Activated T-helper 1 cell treated with anti-CD3 and anti-CD28 coated beads, Interleukin-12 subunit alpha, Interleukin-12 subunit beta, Interleukin-2, Interleukin-4 antibody, amounts not matched to agents 30 ng/mL and 10 ng/mL and 1 ng/mL, durations not matched to agents 14 hours and 24 hours and 36 hours (primary cell): ENCODE measurements at regions of chr10 and their contacts with region 1.

Region 1: DNA sequence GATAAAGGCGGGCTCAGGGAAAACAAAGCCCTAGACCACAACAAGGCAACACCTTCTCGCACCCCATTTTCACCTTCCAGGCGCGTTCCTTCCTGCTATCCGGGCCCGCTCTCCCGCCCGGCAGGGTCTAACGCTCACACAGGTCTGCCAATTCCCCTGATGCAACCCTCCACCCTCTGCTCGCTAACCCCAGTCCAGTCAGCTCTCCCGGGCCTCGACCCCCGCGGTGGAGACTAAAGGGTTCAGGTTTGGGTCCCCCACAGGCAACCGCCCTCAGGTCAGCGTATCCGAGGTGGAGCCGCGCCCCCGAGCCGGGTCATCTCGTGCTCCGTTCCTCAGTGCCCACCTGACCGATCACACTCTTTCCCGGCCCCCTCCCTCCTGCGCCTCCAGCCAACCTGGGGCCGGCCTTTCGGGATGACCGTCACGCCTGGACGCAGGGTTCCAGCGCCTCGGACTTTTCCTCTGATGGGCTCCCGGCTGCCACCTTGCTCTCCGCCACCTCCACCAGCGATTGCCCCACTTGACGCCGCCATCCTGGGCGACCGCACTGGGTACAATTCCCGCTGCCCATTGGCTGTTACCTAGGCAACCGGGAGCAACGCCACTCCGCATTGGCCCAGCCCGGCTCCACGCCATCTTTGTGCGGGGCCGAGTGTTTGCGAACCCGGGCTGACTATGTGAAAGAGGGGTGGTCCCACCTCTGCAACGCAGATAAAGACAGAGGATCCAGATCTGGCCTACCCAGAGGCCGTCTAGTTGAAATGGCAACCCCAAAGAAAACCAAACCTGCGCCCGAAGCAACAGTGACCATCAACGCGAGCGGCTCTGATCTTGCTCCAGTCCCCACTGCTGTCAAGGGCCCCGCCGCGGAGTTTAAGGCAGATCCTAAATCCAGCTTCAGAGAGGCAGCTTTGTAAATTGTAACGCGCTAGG is at the start of gene MORN4:
- DNase-seq: peak; percentile 89
- H3K4me3 Mint-ChIP-seq: peak within 1 kb of the TSS; percentile 96
- H3K27ac Mint-ChIP-seq: peak within 1 kb of the TSS; percentile 89
- H3K4me1 Mint-ChIP-seq: peaks cover 19% of the 10 kb centered on the region
- H3K27me3 Mint-ChIP-seq: peaks cover 2% of the 10 kb centered on the region
- total RNA-seq, gene MORN4: 1.9 TPM in 2 replicates

Region 2: DNA sequence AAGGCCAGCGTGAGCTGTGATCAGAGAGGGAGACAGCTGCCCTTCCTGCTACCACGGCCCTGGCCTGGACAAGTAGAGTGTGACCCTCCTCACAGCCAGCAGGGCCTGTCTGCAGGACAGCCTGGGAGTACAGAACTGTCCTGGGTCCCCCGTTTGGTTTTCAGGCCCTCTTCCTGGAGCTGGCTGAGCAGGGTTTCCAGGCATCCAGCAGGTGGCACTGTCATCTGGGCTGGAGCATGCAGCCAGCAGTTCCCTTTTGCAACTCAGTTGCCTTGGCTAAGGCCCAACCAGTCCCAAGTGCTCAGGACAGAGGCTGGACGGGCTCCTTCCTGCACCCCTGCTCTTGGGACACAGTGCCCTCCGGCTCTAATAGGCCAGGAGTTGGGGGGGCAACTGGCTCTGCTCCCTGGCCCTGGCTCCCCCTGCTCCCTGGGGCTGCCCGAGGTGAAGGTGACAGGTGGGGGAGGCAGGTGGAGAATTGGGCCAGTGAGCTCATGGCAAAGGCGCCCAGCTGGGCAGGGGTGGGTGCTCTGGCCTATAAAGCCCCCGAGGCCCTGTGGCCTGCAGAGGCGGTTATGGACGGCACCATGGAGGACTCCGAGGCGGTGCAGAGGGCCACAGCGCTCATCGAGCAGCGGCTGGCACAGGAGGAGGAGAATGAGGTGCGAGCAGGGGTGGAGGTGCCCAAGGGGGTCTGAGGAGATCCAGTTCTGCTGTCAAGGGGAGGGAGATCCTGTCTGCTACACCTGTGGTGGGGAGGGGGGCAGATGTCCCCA is 60.8 kb before region 1 on chr10 and contains the start of gene ANKRD2:
- intact Hi-C with region 1: no loop called
- DNase-seq: peak; percentile 31
- H3K4me3 Mint-ChIP-seq: no peak within 1 kb of the TSS
- H3K27ac Mint-ChIP-seq: no peak within 1 kb of the TSS
- H3K4me1 Mint-ChIP-seq: no peaks in the 10 kb centered on the region
- H3K27me3 Mint-ChIP-seq: peaks cover 9% of the 10 kb centered on the region
- total RNA-seq, gene ANKRD2: not detected in 2 replicates

Region 3: GRCh38 chr10:97648562-97649404 is 15.6 kb after region 1 on chr10:
- intact Hi-C with region 1: loop called (anchors 2 kb)
- DNase-seq: peak; percentile 24
- H3K4me3 Mint-ChIP-seq: peak overlapping the region; percentile 39
- H3K27ac Mint-ChIP-seq: peak overlapping the region; percentile 45
- H3K4me1 Mint-ChIP-seq: peaks cover 18% of the 10 kb centered on the region
- H3K27me3 Mint-ChIP-seq: no peaks in the 10 kb centered on the region

Region 4: GRCh38 chr10:97676770-97677581 is 43.8 kb after region 1 on chr10:
- intact Hi-C with region 1: loop called (anchors 1 kb)
- DNase-seq: no peak
- H3K4me3 Mint-ChIP-seq: no peak overlapping the region
- H3K27ac Mint-ChIP-seq: no peak overlapping the region
- H3K4me1 Mint-ChIP-seq: peaks cover 10% of the 10 kb centered on the region
- H3K27me3 Mint-ChIP-seq: no peaks in the 10 kb centered on the region

Region 5: DNA sequence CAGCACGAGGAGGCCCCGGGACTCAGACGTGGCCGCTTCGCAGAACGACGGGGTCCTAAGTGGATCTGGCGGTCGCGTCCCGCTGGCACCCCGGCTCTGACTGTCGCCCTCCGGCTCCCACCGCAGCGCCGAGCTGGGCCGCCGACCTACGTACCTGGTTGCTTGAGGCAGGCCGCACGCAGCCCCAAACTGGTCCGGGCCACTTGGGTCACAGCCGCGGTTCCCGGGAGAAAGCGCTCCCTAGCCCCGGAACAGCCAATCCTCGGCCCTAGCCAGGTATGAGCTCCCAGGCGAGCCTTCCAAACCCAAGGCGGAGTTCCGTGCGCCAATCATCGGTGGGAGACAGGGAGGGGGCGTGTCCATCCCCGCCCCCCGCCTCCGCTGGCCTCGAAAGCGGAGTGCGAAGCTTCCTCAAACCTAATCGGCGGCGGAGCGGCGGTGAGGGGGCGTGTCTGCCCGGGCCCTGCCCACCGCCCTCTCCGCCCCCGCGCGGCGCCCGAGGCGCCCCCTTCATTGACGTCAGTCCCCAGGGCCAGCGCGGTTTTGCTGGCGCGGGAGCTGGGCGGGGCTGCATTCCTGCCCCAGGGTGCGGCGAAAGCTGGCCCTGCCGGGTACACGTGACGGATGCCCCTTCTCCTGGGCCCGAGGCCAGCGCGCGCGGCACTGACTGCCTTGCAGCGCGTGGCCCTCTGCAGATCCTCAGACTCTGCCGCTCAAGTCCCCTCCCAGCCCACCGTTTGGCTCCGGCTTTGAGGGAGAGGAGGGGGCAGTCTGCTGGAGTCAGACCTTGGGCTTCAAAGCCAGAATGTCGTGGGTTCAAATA is 54.0 kb after region 1 on chr10 and contains the start of gene AVPI1:
- intact Hi-C with region 1: loop called (anchors 2 kb)
- DNase-seq: peak; percentile 92
- H3K4me3 Mint-ChIP-seq: peak within 1 kb of the TSS; percentile 78
- H3K27ac Mint-ChIP-seq: peak within 1 kb of the TSS; percentile 68
- H3K4me1 Mint-ChIP-seq: peaks cover 14% of the 10 kb centered on the region
- H3K27me3 Mint-ChIP-seq: peaks cover 14% of the 10 kb centered on the region
- total RNA-seq, gene AVPI1: 0.66 and 0.93 TPM in 2 replicates

Region 6: DNA sequence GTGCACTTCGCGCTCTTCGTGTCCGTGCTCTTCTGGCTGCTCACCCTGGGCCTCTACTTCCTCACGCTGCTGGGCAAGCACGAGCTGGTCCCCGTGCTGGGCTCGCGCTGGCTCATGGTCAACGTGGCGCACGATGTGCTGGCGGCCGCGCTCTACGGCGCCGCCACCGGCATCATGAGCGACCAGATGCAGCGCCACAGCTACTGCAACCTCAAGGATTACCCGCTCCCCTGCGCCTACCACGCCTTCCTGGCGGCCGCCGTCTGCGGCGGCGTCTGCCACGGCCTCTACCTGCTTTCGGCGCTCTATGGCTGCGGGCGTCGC is 80.8 kb after region 1 on chr10:
- intact Hi-C with region 1: no loop called
- DNase-seq: peak; percentile 42
- H3K4me3 Mint-ChIP-seq: peak overlapping the region; percentile 97
- H3K27ac Mint-ChIP-seq: peak overlapping the region; percentile 90
- H3K4me1 Mint-ChIP-seq: peaks cover 15% of the 10 kb centered on the region
- H3K27me3 Mint-ChIP-seq: peaks cover 37% of the 10 kb centered on the region